Right ventricle myocardium inferior (tissue), 1 donor: ENCODE measurements at regions of chr12 and their contacts with region 1.

Region 1: GRCh38 chr12:22856178-22856577 is 231.2 kb downstream of the ETNK1 start:
- DNase-seq: no peak
- ATAC-seq: no peak

Region 2: DNA sequence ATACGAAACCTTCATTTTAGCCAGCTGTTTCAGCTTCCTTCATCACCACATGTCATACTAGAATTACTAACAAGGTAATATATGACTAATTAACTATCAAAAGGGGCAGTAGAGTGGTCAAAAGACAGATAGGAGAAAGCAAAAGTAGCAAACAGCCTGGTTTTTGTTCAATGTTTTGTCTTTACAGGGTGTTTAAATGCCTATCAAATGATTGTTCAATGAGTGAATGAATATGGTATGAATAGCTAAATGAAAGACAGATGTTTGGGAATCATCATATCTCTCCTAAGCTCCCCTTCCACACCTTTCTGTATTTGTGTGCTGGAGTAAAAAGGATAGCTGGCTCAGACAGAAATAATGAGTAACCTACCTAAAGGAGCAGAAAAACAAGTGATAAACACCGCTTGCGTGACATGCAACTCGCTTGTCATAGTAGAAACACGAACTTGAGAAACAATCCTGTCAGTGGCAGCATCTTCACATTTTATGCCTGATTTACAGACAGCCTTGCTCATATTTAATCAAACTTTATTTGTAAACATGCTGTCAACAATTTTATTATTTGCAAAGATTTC is 949.2 kb before region 1 on chr12:
- intact Hi-C with region 1: no loop called
- DNase-seq: no peak
- ATAC-seq: no peak

Region 3: DNA sequence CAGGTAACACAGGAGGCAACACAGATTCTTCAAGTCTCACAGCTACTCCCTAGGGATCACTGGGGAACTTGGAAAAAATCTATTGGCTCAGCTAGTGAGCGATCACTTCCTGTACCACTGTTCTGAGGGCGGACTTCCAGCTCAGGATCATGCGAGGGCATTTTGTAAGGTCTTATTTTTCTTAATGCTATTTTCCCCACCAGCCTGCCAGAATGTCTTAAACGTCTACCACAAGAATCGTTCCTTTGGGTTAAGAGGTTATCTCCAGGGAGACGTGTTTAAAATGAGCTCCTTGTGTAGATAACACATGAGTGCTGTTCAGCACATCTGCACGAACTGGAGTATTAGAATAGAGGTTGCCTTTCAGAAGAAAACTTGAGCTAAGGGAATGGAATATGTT is 68.6 kb before region 1 on chr12:
- intact Hi-C with region 1: no loop called
- DNase-seq: no peak
- ATAC-seq: no peak

Region 4: GRCh38 chr12:22981711-22982110 is 125.5 kb after region 1 on chr12:
- intact Hi-C with region 1: loop called (anchors 5 kb)
- DNase-seq: no peak
- ATAC-seq: no peak

Region 5: GRCh38 chr12:23055004-23055403 is 198.8 kb after region 1 on chr12:
- intact Hi-C with region 1: loop called (anchors 2 kb)
- DNase-seq: no peak
- ATAC-seq: no peak